Naive thymus-derived CD4-positive, alpha-beta T cell (primary cell): ENCODE measurements at regions of chr1 and their contacts with region 1.

Region 1: DNA sequence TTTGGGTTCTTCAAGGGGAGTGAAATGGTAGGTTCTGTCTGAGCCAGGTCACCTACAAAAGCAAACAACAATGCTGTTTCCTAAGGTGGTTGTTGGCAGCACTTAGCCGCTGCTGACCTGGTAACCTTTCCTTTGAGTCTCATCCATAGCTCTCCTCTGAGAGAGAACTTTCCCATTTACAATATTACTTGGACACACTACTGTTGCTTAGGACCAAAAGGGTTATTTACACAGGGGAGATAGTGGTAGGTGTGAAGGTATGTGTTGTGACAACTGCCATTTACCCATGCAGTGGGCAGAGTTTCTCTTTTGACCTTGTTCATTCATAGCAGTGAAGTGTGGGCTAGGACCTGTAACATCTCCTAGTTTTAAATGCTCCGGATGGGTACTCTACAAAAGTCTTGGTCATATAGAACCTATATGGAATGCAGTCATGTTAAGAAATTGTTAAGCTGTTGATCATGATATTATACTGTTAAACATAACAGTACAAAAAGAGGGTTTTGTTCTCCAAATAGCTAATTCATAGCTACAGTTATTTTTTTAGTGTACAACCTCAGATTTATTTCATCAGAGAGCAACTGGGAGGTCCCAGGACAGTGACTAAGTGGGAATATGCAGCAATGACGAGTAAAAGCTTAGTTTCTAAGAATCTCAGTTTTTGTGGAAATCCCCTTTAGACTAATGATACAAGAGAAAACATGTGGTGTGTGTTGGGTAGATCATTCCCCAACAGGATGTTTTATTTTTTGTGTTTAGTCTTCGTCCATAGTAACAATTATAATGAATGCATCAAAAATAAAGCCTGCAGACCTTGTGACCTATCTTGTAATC is 219.7 kb downstream of the NFIA start:
- DNase-seq: no peak
- ATAC-seq: no peak
- H3K4me3 ChIP-seq: no peak overlapping the region
- H3K4me3 Mint-ChIP-seq: peak overlapping the region in 1 of 10 donors; percentile 20
- H3K27ac ChIP-seq: no peak overlapping the region
- H3K27ac Mint-ChIP-seq: peak overlapping the region in 1 of 9 donors; percentile 86
- H3K4me1 ChIP-seq: no peaks in the 10 kb centered on the region
- H3K4me1 Mint-ChIP-seq: peaks cover 0 to 24% (median 0%) of the 10 kb centered on the region in 7 donors
- H3K27me3 ChIP-seq: no peaks in the 10 kb centered on the region
- H3K27me3 Mint-ChIP-seq: peaks cover 0 to 4% (median 0%) of the 10 kb centered on the region in 5 donors

Region 2: GRCh38 chr1:61109158-61109557 is 192.9 kb before region 1 on chr1:
- CTCF ChIA-PET with region 1: no interaction called
- POLR2A ChIA-PET with region 1: no interaction called
- intact Hi-C with region 1: no loop called
- DNase-seq: peak in 1 of 9 donors; percentile 8
- ATAC-seq: no peak
- H3K4me3 ChIP-seq: no peak overlapping the region
- H3K4me3 Mint-ChIP-seq: no peak overlapping the region
- H3K27ac ChIP-seq: no peak overlapping the region
- H3K27ac Mint-ChIP-seq: no peak overlapping the region
- H3K4me1 ChIP-seq: no peaks in the 10 kb centered on the region
- H3K4me1 Mint-ChIP-seq: peaks cover 0 to 11% (median 4%) of the 10 kb centered on the region in 7 donors
- H3K27me3 ChIP-seq: no peaks in the 10 kb centered on the region
- H3K27me3 Mint-ChIP-seq: peaks cover 0 to 20% (median 0%) of the 10 kb centered on the region in 5 donors

Region 3: GRCh38 chr1:61332196-61332753 is 30.2 kb after region 1 on chr1:
- CTCF ChIA-PET with region 1: no interaction called
- POLR2A ChIA-PET with region 1: no interaction called
- intact Hi-C with region 1: loop called in 1 of 2 experiments (anchors 1 kb)
- DNase-seq: no peak
- ATAC-seq: no peak
- H3K4me3 ChIP-seq: no peak overlapping the region
- H3K4me3 Mint-ChIP-seq: no peak overlapping the region
- H3K27ac ChIP-seq: no peak overlapping the region
- H3K27ac Mint-ChIP-seq: peak overlapping the region in 1 of 9 donors; percentile 53
- H3K4me1 ChIP-seq: no peaks in the 10 kb centered on the region
- H3K4me1 Mint-ChIP-seq: peaks cover 0 to 10% (median 0%) of the 10 kb centered on the region in 7 donors
- H3K27me3 ChIP-seq: no peaks in the 10 kb centered on the region
- H3K27me3 Mint-ChIP-seq: peaks cover 0 to 3% (median 0%) of the 10 kb centered on the region in 5 donors